Heart right ventricle (tissue), 16 donors: ENCODE measurements at regions of chr11 and their contacts with region 1.

Region 1: DNA sequence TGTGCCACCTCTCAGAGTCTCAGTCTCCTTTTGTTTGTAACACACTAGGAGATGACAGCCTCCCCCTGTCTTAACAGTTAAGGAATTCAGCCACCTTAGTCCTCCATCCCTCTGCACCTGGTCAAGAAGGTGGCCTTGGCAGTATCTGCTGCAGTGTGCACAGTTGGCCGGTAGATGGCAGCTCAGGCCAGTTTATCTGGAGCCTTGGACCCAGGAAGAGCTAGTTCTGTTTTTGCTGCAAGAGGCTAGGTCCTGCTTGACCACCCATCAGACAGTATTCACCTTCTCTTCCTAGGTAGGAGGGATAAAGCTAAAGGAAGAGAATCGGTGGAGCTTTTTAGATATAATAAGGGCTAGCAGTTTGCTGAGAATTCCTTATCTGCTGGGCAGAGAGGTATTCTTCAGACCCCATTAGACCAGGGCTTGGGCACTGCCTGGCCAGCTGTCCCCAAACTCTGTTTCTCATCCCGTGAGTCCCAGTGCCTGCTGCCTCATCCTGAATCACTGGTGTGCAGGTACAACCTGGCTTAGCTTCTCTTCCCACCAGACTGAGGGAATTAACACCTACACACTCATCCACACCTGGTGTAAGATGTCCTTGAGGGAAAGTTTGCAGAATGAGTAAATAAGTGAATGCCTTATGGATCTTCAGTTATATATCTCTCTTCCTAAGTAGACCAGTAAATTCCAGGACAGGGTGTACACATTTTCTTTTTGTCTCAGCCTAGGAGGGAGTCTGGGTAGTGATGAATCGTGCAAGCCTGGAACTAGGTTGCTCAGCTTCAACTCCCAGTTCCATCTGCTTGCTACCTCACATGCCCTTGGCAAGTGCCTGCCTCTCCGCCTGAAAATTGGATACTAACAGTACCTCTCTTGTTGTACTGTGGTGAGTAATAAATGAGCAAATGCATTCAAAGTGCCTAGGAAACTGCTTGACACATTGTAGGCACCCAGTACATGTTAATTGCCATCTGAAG is 70.8 kb upstream of the NARS2 start:
- DNase-seq: peak; percentile 51 to 63
- ATAC-seq: peak; percentile 58 to 88 (median 80)
- H3K4me3 ChIP-seq: no peak overlapping the region
- H3K27ac ChIP-seq: no peak overlapping the region
- H3K4me1 ChIP-seq: peaks cover 0 to 3% (median 0%) of the 10 kb centered on the region in 9 donors
- H3K27me3 ChIP-seq: peaks cover 0 to 13% (median 0%) of the 10 kb centered on the region in 7 donors
- CTCF ChIP-seq: peak; percentile 86 to 96 (median 94)

Region 2: GRCh38 chr11:78715639-78716311 is 70.3 kb after region 1 on chr11:
- intact Hi-C with region 1: loop called in 3 of 10 experiments (anchors 5 to 10 kb)
- DNase-seq: peak in 1 of 2 donors; percentile 23
- ATAC-seq: no peak
- H3K4me3 ChIP-seq: no peak overlapping the region
- H3K27ac ChIP-seq: no peak overlapping the region
- H3K4me1 ChIP-seq: peaks cover 0 to 5% (median 0%) of the 10 kb centered on the region in 9 donors
- H3K27me3 ChIP-seq: peaks cover 0 to 6% (median 0%) of the 10 kb centered on the region in 7 donors
- CTCF ChIP-seq: peak; percentile 9 to 64 (median 50)

Region 3: GRCh38 chr11:79055856-79056642 is 410.5 kb after region 1 on chr11:
- intact Hi-C with region 1: loop called in 1 of 10 experiments (anchors 5 kb)
- DNase-seq: no peak
- ATAC-seq: peak in 6 of 8 donors; percentile 28 to 82 (median 42)
- H3K4me3 ChIP-seq: no peak overlapping the region
- H3K27ac ChIP-seq: peak overlapping the region in 1 of 10 donors; percentile 8
- H3K4me1 ChIP-seq: peaks cover 0 to 7% (median 0%) of the 10 kb centered on the region in 9 donors
- H3K27me3 ChIP-seq: peaks cover 0 to 14% (median 2%) of the 10 kb centered on the region in 7 donors
- CTCF ChIP-seq: no peak

Region 4: GRCh38 chr11:79076526-79077115 is 431.1 kb after region 1 on chr11:
- intact Hi-C with region 1: loop called (anchors 1 to 10 kb)
- DNase-seq: peak in 1 of 2 donors; percentile 44
- ATAC-seq: peak in 1 of 8 donors; percentile 47
- H3K4me3 ChIP-seq: no peak overlapping the region
- H3K27ac ChIP-seq: no peak overlapping the region
- H3K4me1 ChIP-seq: no peaks in the 10 kb centered on the region
- H3K27me3 ChIP-seq: no peaks in the 10 kb centered on the region
- CTCF ChIP-seq: peak; percentile 45 to 73 (median 63)

Region 5: GRCh38 chr11:79493555-79494171 is 848.1 kb after region 1 on chr11:
- intact Hi-C with region 1: loop called in 8 of 10 experiments (anchors 5 to 10 kb)
- DNase-seq: peak; percentile 64 to 70
- ATAC-seq: peak; percentile 70 to 89 (median 84)
- H3K4me3 ChIP-seq: no peak overlapping the region
- H3K27ac ChIP-seq: no peak overlapping the region
- H3K4me1 ChIP-seq: peaks cover 0 to 5% (median 0%) of the 10 kb centered on the region in 9 donors
- H3K27me3 ChIP-seq: peaks cover 0 to 5% (median 0%) of the 10 kb centered on the region in 7 donors
- CTCF ChIP-seq: peak; percentile 62 to 91 (median 81)